PC-9 (cell line): ENCODE measurements at regions of chr4 and their contacts with region 1.

Region 1: GRCh38 chr4:128471576-128471975 is 184.0 kb upstream of the PGRMC2 start:
- DNase-seq: no peak
- H3K4me3 ChIP-seq: no peak overlapping the region
- H3K27ac ChIP-seq: no peak overlapping the region
- H3K4me1 ChIP-seq: no peaks in the 10 kb centered on the region
- H3K27me3 ChIP-seq: no peaks in the 10 kb centered on the region
- CTCF ChIP-seq: no peak

Region 2: DNA sequence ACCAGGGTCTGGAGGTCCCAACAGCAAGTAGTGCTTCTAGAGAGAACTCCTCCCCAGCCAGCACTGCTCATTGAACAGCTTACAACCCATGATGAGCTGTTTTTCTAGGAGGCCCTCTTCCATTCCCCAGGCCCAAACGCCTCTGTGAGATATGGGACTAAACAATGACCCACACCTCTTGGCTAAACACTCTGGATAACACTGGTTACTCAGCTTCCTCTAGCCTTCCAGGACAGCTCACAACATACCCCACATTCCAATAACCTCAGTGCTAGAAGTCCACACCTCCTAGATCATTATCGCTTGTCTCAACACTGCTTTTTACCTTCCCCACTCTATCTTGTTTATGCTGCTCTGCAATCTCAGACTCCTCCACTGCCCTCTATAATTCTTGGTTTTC is 148.6 kb before region 1 on chr4:
- CTCF ChIA-PET with region 1: no interaction called
- POLR2A ChIA-PET with region 1: no interaction called
- intact Hi-C with region 1: no loop called
- DNase-seq: peak; percentile 68 to 91
- H3K4me3 ChIP-seq: peak overlapping the region; percentile 33; the same call in 1 of the 2 replicates
- H3K27ac ChIP-seq: peak overlapping the region; percentile 89
- H3K4me1 ChIP-seq: peaks cover 40% of the 10 kb centered on the region
- H3K27me3 ChIP-seq: no peaks in the 10 kb centered on the region
- CTCF ChIP-seq: no peak

Region 3: GRCh38 chr4:128393101-128393704 is 78.4 kb before region 1 on chr4:
- CTCF ChIA-PET with region 1: no interaction called
- POLR2A ChIA-PET with region 1: no interaction called
- intact Hi-C with region 1: no loop called
- DNase-seq: no peak
- H3K4me3 ChIP-seq: no peak overlapping the region
- H3K27ac ChIP-seq: no peak overlapping the region
- H3K4me1 ChIP-seq: peaks cover 3% of the 10 kb centered on the region
- H3K27me3 ChIP-seq: no peaks in the 10 kb centered on the region
- CTCF ChIP-seq: no peak

Region 4: GRCh38 chr4:128410037-128410436 is 61.5 kb before region 1 on chr4:
- CTCF ChIA-PET with region 1: interaction called, 10 read pairs
- POLR2A ChIA-PET with region 1: no interaction called
- intact Hi-C with region 1: no loop called
- DNase-seq: no peak
- H3K4me3 ChIP-seq: no peak overlapping the region
- H3K27ac ChIP-seq: no peak overlapping the region
- H3K4me1 ChIP-seq: no peaks in the 10 kb centered on the region
- H3K27me3 ChIP-seq: no peaks in the 10 kb centered on the region
- CTCF ChIP-seq: no peak

Region 5: DNA sequence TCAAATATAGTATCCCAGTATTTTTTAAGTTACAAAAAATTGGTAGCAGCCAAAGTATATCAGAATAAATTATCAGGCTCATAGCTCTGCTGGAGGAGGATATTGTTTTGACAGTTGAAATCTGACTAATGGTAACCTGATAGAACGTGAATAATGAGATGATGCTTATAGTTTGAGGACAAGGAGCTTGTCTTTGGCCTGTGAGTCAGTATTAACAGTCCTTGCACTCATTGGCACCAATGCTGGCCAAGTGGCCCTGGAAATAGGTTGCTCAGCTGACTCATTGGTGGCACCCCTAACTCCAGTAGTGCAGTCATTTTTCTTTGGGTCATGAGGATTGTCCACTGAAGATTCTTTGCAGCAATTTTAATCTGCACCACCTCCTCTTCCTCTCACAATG is 134.6 kb after region 1 on chr4:
- CTCF ChIA-PET with region 1: no interaction called
- POLR2A ChIA-PET with region 1: no interaction called
- intact Hi-C with region 1: no loop called
- DNase-seq: peak in 1 of 2 experiments; percentile 43
- H3K4me3 ChIP-seq: no peak overlapping the region
- H3K27ac ChIP-seq: no peak overlapping the region
- H3K4me1 ChIP-seq: peaks cover 15% of the 10 kb centered on the region
- H3K27me3 ChIP-seq: no peaks in the 10 kb centered on the region
- CTCF ChIP-seq: no peak

Region 6: GRCh38 chr4:128823025-128823661 is 351.6 kb after region 1 on chr4:
- CTCF ChIA-PET with region 1: no interaction called
- POLR2A ChIA-PET with region 1: no interaction called
- intact Hi-C with region 1: no loop called
- DNase-seq: peak in 1 of 2 experiments; percentile 56
- H3K4me3 ChIP-seq: no peak overlapping the region
- H3K27ac ChIP-seq: peak overlapping the region; percentile 15; the same call in 1 of the 2 replicates
- H3K4me1 ChIP-seq: peaks cover 13% of the 10 kb centered on the region
- H3K27me3 ChIP-seq: no peaks in the 10 kb centered on the region
- CTCF ChIP-seq: no peak